ENCODE measurements at regions of chrX and their contacts with region 1.

Region 1: DNA sequence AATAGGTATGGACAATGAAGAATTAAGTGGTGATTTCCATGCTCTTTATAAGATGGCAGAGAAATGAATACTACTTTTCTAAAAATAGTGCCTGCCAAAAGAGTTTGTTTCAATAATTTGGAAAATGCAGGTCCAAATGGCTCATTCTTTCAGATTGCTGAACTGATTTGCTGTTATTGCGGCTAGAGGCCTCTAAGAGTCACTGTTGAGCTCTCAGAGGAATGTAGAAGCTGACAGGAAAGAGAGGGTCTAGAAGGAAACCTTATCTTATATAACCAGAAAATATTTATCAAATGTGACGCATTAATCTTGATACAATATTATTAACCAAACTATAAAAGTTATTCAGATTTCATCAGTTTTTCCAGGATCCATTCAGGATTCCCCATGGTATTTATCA is 65.7 kb upstream of the PAGE1 start:
- DNase-seq: peak; percentile 23
- ATAC-seq: no peak
- H3K4me3 ChIP-seq: no peak overlapping the region
- H3K27ac ChIP-seq: no peak overlapping the region
- H3K4me1 ChIP-seq: peaks cover 21% of the 10 kb centered on the region
- H3K27me3 ChIP-seq: no peaks in the 10 kb centered on the region
- CTCF ChIP-seq: peak; percentile 65
- EP300 ChIP-seq: no peak
- POLR2A ChIP-seq: no peak
- RAD21 ChIP-seq: no peak

Region 2: DNA sequence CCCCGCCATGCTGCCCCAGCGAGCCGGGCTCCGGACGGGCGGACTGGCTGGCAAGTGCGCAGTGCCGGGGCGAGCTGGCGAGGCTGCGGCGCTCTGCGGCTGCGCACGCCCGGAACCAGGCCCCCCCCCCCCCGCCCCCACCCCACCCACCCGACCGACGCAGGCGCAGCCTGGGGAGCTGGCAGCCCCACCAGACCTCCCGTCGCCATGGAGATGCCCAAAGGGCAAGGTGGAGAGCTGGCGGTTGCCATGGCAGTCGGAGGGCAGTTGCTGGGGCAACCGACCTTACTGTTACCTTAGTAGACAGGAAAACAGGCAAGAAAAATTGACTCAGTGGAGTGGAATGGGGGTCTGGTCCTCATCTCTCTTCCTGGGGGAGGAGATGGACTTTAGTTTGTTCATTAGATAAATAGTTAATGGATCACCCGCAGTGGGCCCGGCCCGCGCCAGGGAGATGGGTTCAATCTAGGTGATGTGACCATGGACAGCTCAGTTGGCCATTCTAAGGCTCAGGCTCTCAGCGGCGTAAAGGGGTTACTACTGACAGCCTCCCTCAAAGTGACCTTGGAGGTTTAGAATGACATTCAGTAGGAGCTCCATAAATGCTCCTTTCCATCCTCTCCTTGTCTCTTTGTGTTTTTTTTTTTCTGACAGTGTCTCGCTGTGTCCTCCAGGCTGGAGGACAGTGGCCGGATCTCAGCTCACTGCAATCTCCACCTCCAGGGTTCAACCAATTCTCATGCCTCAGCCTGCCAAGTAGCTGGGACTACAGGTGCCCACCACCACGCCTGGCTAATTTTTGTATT is 925.8 kb before region 1 on chrX and contains the start of gene PCSK1N:
- CTCF ChIA-PET with region 1: no interaction called
- POLR2A ChIA-PET with region 1: no interaction called
- in situ Hi-C with region 1: no loop called
- intact Hi-C with region 1: no loop called
- DNase-seq: peak; percentile 88
- ATAC-seq: peak; percentile 82
- H3K4me3 ChIP-seq: peak within 1 kb of the TSS; percentile 62 to 81 (median 65)
- H3K27ac ChIP-seq: peak within 1 kb of the TSS; percentile 77
- H3K4me1 ChIP-seq: peaks cover 32% of the 10 kb centered on the region
- H3K27me3 ChIP-seq: no peaks in the 10 kb centered on the region
- CTCF ChIP-seq: no peak
- EP300 ChIP-seq: peak in 1 of 2 experiments; percentile 15; a peak in 1 of 4 replicates
- POLR2A ChIP-seq: peak in 1 of 2 experiments; percentile 49; a peak in 2 of 4 replicates
- RAD21 ChIP-seq: no peak
- total RNA-seq, gene PCSK1N: 5.1 and 14.0 TPM in 2 replicates

Region 3: GRCh38 chrX:49725923-49726904 is 35.3 kb before region 1 on chrX:
- CTCF ChIA-PET with region 1: no interaction called
- POLR2A ChIA-PET with region 1: no interaction called
- in situ Hi-C with region 1: no loop called
- intact Hi-C with region 1: no loop called
- DNase-seq: no peak
- ATAC-seq: no peak
- H3K4me3 ChIP-seq: no peak overlapping the region
- H3K27ac ChIP-seq: no peak overlapping the region
- H3K4me1 ChIP-seq: no peaks in the 10 kb centered on the region
- H3K27me3 ChIP-seq: no peaks in the 10 kb centered on the region
- CTCF ChIP-seq: no peak
- EP300 ChIP-seq: no peak
- POLR2A ChIP-seq: no peak
- RAD21 ChIP-seq: no peak

Region 4: DNA sequence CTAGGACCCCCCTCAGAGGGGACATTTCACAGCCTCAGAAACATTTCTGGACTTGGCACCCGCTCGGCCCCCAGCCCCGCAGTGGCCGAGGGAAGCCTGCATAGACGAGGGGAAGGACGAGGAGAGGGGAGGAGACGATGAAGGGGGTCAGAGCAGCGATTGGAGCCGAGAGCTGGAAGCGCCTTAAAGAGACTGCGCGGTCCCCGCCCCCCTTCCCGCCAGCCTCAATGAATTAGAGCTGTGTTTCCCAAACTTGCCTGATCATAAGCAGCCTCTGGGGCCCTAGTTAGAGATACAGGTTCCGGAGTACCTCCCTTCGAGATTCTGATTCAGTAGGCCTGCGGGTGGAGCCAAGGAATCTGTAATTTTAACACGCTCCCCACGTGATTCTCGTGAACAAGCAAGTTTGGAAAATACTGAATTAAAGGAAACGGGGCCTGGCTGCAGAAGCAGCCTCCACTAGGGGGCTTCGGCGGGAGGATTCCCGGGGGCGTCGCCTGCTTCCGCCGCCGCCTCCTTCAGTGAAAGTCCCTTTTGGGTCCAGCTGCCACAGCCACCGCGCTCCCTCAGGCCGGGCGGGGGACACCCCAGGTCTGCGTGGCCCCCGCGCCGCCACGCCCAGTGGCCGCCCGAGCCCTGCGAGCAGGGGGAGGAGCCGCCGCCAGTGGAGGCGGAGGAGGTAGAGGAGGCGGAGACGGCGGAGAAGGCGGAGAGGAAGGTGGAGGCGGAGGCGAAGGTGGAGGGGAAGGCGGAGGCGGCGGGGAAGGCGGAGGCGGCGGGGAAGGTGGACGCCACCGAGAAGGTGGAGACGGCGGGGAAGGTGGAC is 117.6 kb after region 1 on chrX and contains the start of gene USP27X:
- CTCF ChIA-PET with region 1: no interaction called
- POLR2A ChIA-PET with region 1: no interaction called
- in situ Hi-C with region 1: no loop called
- intact Hi-C with region 1: loop called (anchors 1 kb)
- DNase-seq: peak; percentile 86
- ATAC-seq: peak; percentile 72
- H3K4me3 ChIP-seq: peak within 1 kb of the TSS; percentile 52 to 76 (median 71)
- H3K27ac ChIP-seq: peak within 1 kb of the TSS; percentile 97
- H3K4me1 ChIP-seq: peaks cover 64% of the 10 kb centered on the region
- H3K27me3 ChIP-seq: no peaks in the 10 kb centered on the region; a peak in 1 of 5 replicates
- CTCF ChIP-seq: peak; percentile 60
- EP300 ChIP-seq: no peak
- POLR2A ChIP-seq: peak in 1 of 2 experiments; percentile 60; a peak in 1 of 4 replicates
- RAD21 ChIP-seq: peak; percentile 18; the same call in 1 of the 2 replicates
- total RNA-seq, gene USP27X: 7.2 and 7.5 TPM in 2 replicates

Region 5: GRCh38 chrX:50281253-50281652 is 519.8 kb after region 1 on chrX:
- CTCF ChIA-PET with region 1: no interaction called
- POLR2A ChIA-PET with region 1: no interaction called
- in situ Hi-C with region 1: no loop called
- intact Hi-C with region 1: no loop called
- DNase-seq: no peak
- ATAC-seq: no peak
- H3K4me3 ChIP-seq: no peak overlapping the region
- H3K27ac ChIP-seq: no peak overlapping the region
- H3K4me1 ChIP-seq: no peaks in the 10 kb centered on the region
- H3K27me3 ChIP-seq: no peaks in the 10 kb centered on the region; a peak in 1 of 5 replicates
- CTCF ChIP-seq: no peak
- EP300 ChIP-seq: no peak
- POLR2A ChIP-seq: no peak
- RAD21 ChIP-seq: no peak